Heart left ventricle (tissue), 16 donors: ENCODE measurements at regions of chr10 and their contacts with region 1.

Region 1: GRCh38 chr10:110210674-110211464 is 3.5 kb downstream of the MXI1 start:
- DNase-seq: peak; percentile 97 to 98 (median 97)
- ATAC-seq: peak; percentile 90 to 92 (median 91)
- H3K4me3 ChIP-seq: peak overlapping the region; percentile 61 to 92 (median 83)
- H3K27ac ChIP-seq: peak overlapping the region; percentile 94 to 99 (median 98)
- H3K4me1 ChIP-seq: peaks cover 11 to 51% (median 34%) of the 10 kb centered on the region in 12 donors
- H3K27me3 ChIP-seq: no peaks in the 10 kb centered on the region
- CTCF ChIP-seq: no peak
- POLR2A ChIP-seq: peak in 1 of 2 donors; percentile 76

Region 2: DNA sequence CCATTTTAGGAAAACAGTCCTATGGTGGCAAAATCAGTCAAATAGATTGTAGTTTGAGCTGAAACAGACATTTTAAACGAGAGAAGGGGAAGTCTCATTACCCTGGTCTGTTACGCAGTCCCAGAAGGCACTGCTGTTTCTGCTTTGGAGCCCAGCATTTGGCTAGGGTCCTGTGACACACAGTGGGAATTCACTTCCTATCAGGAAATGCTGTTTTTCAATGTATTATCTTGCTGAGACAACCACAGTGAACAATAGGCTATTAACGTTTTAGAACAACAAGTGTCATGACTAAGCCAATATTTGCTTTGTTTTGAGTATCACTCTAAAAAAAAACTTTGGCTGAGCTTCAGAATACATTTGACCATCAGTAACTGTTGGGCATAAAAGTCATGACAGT is 129.0 kb before region 1 on chr10:
- intact Hi-C with region 1: loop called in 1 of 10 experiments (anchors 2 kb)
- DNase-seq: peak in 3 of 5 donors; percentile 30 to 63 (median 36)
- ATAC-seq: peak; percentile 42 to 85 (median 72)
- H3K4me3 ChIP-seq: no peak overlapping the region
- H3K27ac ChIP-seq: peak overlapping the region in 11 of 12 donors; percentile 35 to 83 (median 60)
- H3K4me1 ChIP-seq: peaks cover 15 to 89% (median 64%) of the 10 kb centered on the region in 12 donors
- H3K27me3 ChIP-seq: no peaks in the 10 kb centered on the region
- CTCF ChIP-seq: no peak
- POLR2A ChIP-seq: no peak

Region 3: DNA sequence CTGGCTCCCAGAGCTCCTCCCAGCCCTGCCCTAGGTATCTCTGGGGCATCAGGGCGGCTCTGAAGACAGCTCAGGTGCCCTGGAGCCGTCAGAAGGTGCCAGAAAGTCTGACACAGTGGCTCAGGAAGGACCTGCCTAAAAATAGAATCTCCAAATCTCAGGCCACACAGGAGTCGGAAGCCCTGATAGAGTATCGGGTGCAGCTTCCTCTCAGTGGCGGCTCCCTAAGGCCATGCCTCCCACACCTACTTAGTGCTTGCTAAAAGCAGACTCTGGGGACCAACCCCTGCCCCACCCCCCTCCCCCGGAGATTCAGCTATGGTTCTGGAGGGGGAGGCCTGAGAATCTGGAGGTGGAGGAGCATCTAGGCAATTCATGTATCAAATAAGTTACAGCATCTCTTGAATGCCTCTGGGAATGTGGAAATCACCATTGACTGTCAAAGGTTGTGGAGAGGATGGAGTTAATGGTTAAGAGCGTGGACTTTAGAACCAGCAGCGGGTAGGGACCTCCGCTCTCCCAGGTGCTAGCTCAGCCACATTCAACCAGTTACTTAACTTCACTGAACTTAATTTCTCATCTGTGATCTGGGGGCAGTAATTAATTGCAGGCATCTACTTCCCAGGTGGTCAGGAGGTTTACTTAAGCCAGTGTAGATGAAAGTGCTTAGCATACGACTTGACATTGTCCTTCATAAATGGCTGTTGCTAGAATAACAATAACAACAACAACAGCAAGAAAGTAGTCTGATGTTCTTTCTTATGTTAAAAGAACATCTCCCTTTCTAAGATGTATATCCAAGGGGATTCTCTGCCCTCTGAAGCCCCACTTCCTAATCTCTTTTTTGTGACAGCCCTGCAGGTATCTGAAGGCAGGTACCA is 42.0 kb before region 1 on chr10:
- intact Hi-C with region 1: loop called in 4 of 10 experiments (anchors 2 to 5 kb)
- DNase-seq: peak in 2 of 5 donors; percentile 25 to 47
- ATAC-seq: peak; percentile 33 to 82 (median 67)
- H3K4me3 ChIP-seq: peak overlapping the region in 5 of 12 donors; percentile 7 to 23 (median 21)
- H3K27ac ChIP-seq: peak overlapping the region in 8 of 12 donors; percentile 15 to 72 (median 48)
- H3K4me1 ChIP-seq: peaks cover 5 to 31% (median 26%) of the 10 kb centered on the region in 12 donors
- H3K27me3 ChIP-seq: peaks cover 0 to 41% (median 0%) of the 10 kb centered on the region in 9 donors
- CTCF ChIP-seq: no peak
- POLR2A ChIP-seq: no peak

Region 4: GRCh38 chr10:110225756-110226542 is 15.1 kb after region 1 on chr10:
- intact Hi-C with region 1: loop called in 6 of 10 experiments (anchors 1 to 2 kb)
- DNase-seq: peak; percentile 92 to 95 (median 95)
- ATAC-seq: peak; percentile 55 to 78 (median 70)
- H3K4me3 ChIP-seq: peak overlapping the region; percentile 50 to 93 (median 87)
- H3K27ac ChIP-seq: peak overlapping the region; percentile 76 to 96 (median 88)
- H3K4me1 ChIP-seq: peaks cover 12 to 61% (median 39%) of the 10 kb centered on the region in 12 donors
- H3K27me3 ChIP-seq: no peaks in the 10 kb centered on the region
- CTCF ChIP-seq: peak; percentile 55 to 91 (median 72)
- POLR2A ChIP-seq: peak in 1 of 2 donors; percentile 39

Region 5: GRCh38 chr10:110279407-110279986 is 68.6 kb after region 1 on chr10:
- intact Hi-C with region 1: loop called in 8 of 10 experiments (anchors 1 to 5 kb)
- DNase-seq: peak in 4 of 5 donors; percentile 34 to 57 (median 50)
- ATAC-seq: peak; percentile 39 to 75 (median 69)
- H3K4me3 ChIP-seq: peak overlapping the region in 1 of 12 donors; percentile 27
- H3K27ac ChIP-seq: peak overlapping the region in 8 of 12 donors; percentile 2 to 46 (median 26)
- H3K4me1 ChIP-seq: peaks cover 0 to 64% (median 35%) of the 10 kb centered on the region in 12 donors
- H3K27me3 ChIP-seq: no peaks in the 10 kb centered on the region
- CTCF ChIP-seq: peak; percentile 62 to 90 (median 81)
- POLR2A ChIP-seq: no peak

Region 6: DNA sequence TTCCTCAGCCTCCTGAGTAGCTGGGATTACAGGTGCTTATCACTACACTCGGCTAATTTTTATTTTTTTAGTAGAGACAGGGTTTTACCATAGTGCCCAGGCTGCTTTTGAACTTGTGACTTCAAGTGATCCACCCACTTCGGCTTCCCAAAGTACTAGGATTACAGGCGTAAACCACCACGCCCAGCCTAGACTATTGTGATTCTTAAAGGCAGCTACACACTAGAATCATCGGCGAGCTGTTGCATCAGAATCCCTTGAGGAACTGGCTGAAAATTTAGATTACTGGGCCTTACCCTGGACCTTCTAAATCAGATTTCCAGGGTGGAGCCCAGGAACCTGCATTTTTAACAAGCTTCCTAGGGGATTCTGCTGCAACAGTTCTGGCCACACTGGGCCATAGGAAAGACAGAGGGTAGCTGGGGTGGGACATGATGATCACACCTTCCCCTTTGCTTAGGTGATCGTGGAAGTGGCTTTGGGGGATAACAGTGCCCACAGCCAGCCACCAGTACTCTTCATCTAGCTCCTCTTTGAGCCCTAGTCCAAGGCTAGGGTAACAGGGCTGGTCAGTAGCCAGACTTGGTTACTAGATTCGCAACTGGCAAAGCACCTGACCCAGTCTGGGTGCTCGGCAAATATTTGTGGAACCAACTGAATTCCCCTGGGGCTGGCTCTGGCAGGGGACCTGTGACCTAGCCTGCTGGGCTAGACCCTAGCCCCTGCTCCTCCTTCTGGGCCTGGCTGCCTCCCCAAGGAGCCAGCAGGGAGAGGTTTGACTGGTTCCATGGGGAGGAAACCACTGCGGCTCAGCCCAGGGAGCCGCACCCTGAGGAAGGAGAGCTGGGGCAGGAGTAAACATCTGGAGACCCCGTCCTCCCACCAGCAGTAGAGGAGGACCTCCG is 219.8 kb after region 1 on chr10:
- intact Hi-C with region 1: no loop called
- DNase-seq: no peak
- ATAC-seq: no peak
- H3K4me3 ChIP-seq: no peak overlapping the region
- H3K27ac ChIP-seq: no peak overlapping the region
- H3K4me1 ChIP-seq: peaks cover 0 to 18% (median 1%) of the 10 kb centered on the region in 12 donors
- H3K27me3 ChIP-seq: no peaks in the 10 kb centered on the region
- CTCF ChIP-seq: no peak
- POLR2A ChIP-seq: no peak